Naive thymus-derived CD8-positive, alpha-beta T cell (primary cell): ENCODE measurements at regions of chr19 and their contacts with region 1.

Region 1: DNA sequence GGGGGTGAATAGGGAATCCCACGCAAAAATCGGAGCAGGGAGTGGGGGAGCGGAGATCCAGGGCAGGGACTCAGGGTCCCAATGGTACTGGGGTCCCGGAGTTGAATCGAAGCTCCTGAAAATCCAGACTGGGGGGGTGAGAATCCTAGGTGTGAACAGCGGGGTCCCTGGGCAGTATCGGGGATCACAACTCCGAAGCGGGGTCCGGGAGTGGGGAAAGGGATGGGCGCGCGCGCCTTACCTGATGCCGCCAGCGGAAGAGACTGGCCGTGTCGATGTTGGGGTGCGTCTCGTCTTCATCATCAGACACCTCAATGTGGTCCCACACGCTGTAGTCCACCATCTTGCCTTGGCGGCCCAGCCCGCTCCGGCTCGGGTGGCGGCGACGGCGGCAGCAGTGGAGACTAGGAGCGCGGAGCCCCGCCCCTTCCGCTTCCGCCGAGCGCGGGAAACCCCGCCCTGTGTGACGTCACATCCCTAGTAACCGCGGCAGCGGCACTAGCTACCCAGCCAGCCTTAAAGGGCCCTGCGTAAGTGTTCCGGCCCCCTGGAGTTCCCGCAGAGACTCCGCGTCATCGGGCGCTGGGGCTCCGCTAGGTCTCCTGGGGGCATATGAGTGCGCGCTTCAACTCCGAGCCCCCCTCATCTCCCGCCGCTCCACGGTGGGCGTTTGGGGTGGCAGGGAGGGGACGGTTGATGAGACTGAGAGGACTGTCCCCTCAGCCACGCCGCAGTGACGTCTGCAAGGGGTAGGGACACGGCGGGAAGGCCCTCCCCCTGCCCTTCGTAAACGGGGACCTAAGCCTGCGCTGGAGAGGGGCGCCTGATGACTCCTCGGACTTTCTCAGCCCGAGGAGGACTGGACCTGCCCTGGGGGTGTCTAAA is at the start of gene CDC37:
- DNase-seq: peak; percentile 96 to 98 (median 97)
- ATAC-seq: peak; percentile 78
- H3K4me3 Mint-ChIP-seq: peak within 1 kb of the TSS; percentile 91 to 98 (median 92)
- H3K27ac Mint-ChIP-seq: peak within 1 kb of the TSS; percentile 81 to 98 (median 98)
- H3K4me1 Mint-ChIP-seq: peaks cover 31 to 74% (median 70%) of the 10 kb centered on the region in 4 donors
- H3K27me3 Mint-ChIP-seq: no peaks in the 10 kb centered on the region
- polyA plus RNA-seq, gene CDC37: 63.2 to 81.1 (median 65.6) TPM

Region 2: DNA sequence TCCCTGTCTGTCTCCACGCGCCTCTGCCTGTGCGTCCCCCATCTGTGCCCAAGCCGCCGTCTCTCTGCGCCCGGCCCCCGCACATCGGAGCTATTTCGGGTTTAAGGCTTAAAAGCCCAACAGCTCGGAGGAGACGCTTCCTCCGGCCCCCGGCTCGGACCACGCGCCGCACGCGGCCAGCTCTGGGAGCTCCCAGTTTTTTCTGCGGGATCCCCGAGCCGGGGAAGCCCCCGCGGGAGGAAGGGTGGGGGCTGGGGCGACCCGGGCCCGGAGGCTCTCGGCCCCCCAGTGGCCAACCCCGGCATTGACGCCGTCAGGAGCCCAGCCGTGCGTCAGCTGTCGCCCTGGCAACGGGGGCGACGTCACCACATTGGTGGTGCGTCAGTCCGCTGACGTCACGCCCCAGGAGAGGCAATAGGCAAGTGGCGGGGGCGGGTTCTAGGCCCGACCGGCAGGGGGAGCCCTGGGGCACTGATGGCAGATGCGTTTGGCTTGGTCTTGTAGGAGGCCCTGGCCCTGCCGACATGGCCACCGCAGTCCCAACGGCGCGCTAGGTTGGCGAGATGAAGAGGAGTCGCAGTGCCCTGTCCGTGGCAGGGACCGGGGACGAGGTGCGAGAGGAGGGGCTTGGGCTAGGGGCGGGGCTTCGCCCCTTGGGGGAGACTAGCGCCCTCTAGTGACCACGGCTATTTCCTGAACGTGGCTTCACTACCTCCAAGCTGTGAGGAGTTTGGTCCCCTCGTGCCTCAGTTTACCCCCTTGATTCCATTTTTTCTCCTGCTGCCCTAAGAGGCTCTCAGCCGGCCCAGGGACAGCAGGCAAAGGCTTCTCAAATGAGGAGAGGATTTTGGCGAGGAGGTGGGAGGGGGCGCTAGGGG is 13.2 kb after region 1 on chr19:
- POLR2A ChIA-PET with region 1: interaction called, 91 read pairs
- DNase-seq: peak; percentile 88 to 99 (median 97)
- ATAC-seq: peak; percentile 56 to 69
- H3K4me3 Mint-ChIP-seq: peak overlapping the region; percentile 61 to 80 (median 74)
- H3K27ac Mint-ChIP-seq: peak overlapping the region; percentile 63 to 99 (median 95)
- H3K4me1 Mint-ChIP-seq: peaks cover 24 to 63% (median 51%) of the 10 kb centered on the region in 4 donors
- H3K27me3 Mint-ChIP-seq: peaks cover 21 to 44% (median 30%) of the 10 kb centered on the region in 5 donors

Region 3: DNA sequence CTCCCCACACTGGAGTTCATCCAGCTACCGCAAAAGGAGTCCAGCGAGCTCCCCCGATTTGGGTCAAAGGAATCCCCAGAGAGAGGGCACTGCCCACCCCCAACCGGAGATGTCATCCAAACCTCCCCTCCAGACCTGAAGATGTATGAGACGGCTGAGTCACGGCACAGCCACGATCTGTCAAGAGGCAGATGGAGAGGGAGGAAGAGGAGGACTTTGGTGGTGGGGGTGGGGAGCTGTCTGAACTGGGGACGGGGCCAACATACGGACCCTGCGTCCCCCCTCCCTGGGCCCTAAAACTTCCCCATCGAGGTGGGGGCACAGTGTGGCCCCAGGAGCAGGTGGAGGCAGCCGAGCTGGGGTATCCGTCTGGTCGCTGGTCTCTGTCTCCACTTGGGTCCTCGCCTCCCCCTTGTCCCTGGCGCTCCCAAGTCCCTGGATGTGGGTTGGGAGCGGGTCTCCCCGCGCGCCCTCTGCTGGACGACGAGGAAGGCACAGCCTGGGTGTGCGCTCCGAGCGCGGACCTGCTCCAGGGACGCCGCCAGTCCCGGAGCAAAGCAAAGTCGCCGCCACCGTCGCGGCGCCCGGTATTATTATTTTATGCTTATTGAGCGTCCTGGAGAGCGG is 20.7 kb after region 1 on chr19:
- POLR2A ChIA-PET with region 1: interaction called, 91 read pairs
- DNase-seq: peak; percentile 44 to 76 (median 62)
- ATAC-seq: peak; percentile 15 to 48
- H3K4me3 Mint-ChIP-seq: peak overlapping the region; percentile 28 to 88 (median 78)
- H3K27ac Mint-ChIP-seq: peak overlapping the region in 8 of 10 donors; percentile 29 to 97 (median 64)
- H3K4me1 Mint-ChIP-seq: peaks cover 29 to 81% (median 65%) of the 10 kb centered on the region in 4 donors
- H3K27me3 Mint-ChIP-seq: peaks cover 29 to 65% (median 46%) of the 10 kb centered on the region in 5 donors